ENCODE measurements at regions of chr15 and their contacts with region 1.

Region 1: DNA sequence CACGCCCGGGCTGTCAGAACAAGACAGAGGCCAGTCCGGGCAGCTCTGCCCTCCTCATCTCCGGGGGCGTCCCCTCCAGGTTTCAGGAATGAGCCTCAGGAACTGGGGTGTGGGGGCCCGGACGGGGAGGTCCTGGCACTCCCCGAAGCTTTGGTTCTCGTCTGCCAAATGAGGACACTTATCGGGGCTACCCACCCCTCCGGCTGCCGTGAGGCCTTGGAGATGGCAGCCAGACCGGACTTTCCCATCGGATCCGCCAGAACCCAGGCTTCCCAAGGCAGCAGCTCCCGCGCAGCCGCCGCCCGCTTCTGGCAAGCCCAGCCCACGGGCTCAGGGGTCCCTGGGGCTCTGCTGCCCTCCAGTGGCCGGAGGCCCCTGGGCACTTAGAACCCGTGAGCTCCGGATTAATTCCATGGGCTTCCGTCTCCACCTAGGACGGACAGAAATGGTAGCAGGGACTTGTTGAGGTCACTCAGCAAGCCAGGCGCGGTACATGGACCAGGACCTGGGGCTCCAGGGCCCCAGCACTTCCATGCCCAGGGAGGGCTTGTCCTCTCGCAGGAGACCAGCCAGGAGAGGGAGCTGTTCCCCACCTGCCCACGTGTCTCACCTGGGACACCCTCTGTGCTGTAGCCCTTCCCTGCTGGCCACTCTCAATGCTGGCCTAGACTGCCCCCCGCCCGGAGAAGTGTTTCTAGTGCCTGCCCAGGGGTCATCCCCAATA is 89.4 kb downstream of the LINGO1 start:
- DNase-seq: peak; percentile 87 to 94 (median 90)
- ATAC-seq: peak; percentile 77 to 93 (median 90)
- H3K4me3 ChIP-seq: peak overlapping the region in 11 of 12 donors; percentile 7 to 57 (median 44)
- H3K27ac ChIP-seq: peak overlapping the region in 11 of 12 donors; percentile 53 to 86 (median 68)
- H3K4me1 ChIP-seq: peaks cover 4 to 54% (median 48%) of the 10 kb centered on the region in 12 donors
- H3K27me3 ChIP-seq: no peaks in the 10 kb centered on the region
- CTCF ChIP-seq: peak in 11 of 12 donors; percentile 90 to 99 (median 97)
- POLR2A ChIP-seq: peak in 1 of 2 donors; percentile 26

Region 2: DNA sequence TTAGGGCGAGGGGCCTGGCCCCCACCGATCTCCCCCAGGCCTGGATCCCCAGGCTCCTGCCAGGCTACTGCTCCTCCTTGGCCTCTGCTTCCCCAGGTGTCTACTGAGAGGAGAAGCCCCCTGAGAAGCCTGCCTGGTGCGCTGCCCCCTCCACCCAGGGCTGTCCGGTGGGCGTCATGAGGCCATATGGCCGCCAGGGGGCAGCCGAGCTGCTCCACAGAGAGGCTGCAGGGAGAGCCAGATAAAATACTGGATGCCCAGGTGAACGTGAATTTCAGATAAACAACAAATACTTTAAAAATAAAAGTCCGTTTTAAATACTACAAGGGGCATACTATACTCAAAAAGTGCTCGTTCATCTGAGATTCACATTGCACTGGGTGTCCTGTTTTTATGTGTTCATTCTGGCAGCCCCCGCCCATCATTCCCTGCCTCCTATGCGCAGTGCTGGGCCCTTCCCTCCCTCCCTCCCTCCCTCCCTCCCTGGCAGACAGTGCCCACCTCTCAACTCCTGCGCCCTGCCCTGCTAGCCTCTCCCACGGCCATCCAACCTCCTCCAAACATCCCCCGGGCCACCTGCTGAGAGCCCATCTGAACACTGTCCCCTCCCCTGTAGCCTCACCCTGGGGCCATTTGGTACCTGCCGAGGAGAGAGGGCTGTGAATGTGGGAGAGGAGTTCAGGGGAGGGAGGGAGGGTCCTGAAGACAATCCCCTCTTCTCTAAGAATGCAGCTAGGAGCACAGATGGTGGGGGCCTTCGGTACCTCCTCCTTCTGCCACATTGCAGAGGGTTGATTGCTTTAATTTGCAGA is 518.8 kb before region 1 on chr15:
- intact Hi-C with region 1: loop called in 9 of 10 experiments (anchors 2 to 10 kb)
- DNase-seq: peak; percentile 60 to 84 (median 69)
- ATAC-seq: peak; percentile 22 to 48 (median 40)
- H3K4me3 ChIP-seq: no peak overlapping the region
- H3K27ac ChIP-seq: peak overlapping the region in 1 of 12 donors; percentile 42
- H3K4me1 ChIP-seq: peaks cover 0 to 41% (median 19%) of the 10 kb centered on the region in 12 donors
- H3K27me3 ChIP-seq: no peaks in the 10 kb centered on the region
- CTCF ChIP-seq: peak; percentile 92 to 98 (median 96)
- POLR2A ChIP-seq: no peak

Region 3: DNA sequence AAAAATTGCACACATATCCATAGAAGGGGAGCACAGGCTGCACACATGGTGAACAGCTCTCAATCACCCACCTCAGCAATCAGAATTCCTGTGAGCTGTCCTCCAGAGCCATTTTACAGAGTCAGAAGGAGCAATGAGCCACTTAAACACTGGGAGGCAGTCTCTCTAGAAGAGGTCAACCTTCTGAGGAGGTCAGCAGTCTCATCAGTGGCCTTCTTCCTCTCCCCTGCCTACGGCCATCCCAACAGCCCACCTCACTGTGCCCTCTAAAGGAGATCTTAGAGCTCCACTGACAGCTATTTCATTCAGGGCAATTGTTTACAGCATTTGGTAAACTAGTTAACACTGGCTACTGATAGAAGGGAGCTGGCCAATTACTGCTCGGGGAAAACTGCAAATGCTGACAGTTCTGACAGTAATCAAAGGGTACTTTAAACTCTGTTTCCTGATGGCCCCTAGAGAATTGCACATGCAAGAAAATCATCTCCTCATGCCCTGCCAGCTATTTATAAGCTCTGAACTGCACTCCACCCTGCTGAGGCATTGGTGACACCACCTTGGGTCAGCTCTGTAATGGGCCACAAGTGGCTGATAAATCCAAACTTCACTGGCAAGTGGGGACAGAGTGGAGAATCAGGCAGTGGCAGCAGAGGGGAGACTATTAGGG is 430.4 kb before region 1 on chr15:
- intact Hi-C with region 1: loop called in 8 of 10 experiments (anchors 2 to 5 kb)
- DNase-seq: no peak
- ATAC-seq: peak in 3 of 4 donors; percentile 30 to 72 (median 37)
- H3K4me3 ChIP-seq: no peak overlapping the region
- H3K27ac ChIP-seq: peak overlapping the region in 1 of 12 donors; percentile 1
- H3K4me1 ChIP-seq: peaks cover 0 to 34% (median 14%) of the 10 kb centered on the region in 12 donors
- H3K27me3 ChIP-seq: no peaks in the 10 kb centered on the region
- CTCF ChIP-seq: peak in 1 of 12 donors; percentile 12
- POLR2A ChIP-seq: no peak

Region 4: DNA sequence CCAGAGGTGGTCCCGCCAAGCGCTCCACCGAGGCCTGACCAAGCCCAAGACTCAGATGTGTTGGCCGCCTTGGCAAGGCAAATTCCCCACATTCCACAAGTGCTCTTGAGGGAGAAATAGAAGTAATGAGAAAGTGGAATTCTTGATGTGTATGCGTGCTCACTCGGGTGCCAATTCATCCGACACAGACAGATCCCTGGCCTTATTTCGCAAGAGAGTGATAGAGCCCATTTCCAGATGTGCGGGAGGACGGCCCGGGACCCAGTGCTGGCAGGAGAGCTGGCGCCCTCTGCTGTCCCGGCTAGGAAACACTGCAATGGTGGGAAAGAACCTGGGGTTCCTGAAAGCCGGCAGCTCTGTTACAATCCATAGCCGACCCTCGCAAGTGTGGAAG is 46.6 kb before region 1 on chr15:
- intact Hi-C with region 1: loop called in 8 of 10 experiments (anchors 2 to 5 kb)
- DNase-seq: peak; percentile 88 to 92 (median 90)
- ATAC-seq: peak; percentile 77 to 85 (median 82)
- H3K4me3 ChIP-seq: peak overlapping the region in 9 of 12 donors; percentile 8 to 39 (median 22)
- H3K27ac ChIP-seq: peak overlapping the region; percentile 53 to 96 (median 90)
- H3K4me1 ChIP-seq: peaks cover 3 to 85% (median 67%) of the 10 kb centered on the region in 12 donors
- H3K27me3 ChIP-seq: no peaks in the 10 kb centered on the region
- CTCF ChIP-seq: peak; percentile 92 to 98 (median 96)
- POLR2A ChIP-seq: no peak

Region 5: DNA sequence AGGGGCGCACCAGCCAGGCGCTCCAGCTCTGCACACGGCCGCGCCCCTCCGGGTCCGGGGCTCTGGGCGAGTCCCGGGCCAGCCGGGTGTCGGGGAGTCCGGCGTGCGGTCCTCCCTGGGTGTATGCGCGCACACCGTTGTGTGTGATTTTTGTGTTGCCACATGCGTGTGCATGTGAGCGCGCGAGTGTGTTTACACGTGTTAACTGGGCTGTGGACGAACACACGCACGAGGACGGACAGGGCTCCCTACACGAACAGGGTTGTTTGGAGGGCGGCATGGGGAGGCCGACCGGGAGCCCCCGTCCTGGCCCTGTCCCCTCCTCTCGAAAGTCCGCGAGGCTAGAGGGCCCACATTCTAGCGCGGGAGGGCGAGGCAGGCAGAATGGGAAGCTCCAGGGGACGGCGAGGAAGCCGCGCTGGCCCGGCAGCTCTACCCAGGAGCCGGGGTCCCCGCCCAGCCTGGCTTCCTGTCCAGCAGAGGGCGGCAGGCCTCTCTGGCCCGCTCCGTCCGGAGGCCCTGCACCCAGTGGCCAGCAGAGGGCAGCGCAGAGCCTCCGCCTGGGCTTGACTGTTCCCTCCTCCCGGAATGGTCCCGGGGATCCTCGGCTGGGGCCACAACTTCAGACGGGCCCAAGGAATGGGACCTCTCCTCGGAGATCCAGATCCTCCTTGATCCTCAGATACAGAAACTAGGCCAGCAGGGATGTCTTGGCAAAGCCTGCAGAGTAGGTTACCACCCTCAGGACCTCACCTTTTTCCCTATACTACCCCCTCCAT is 90.0 kb after region 1 on chr15:
- intact Hi-C with region 1: loop called in 1 of 10 experiments (anchors 5 kb)
- DNase-seq: peak; percentile 89 to 95 (median 90)
- ATAC-seq: peak; percentile 86 to 97 (median 94)
- H3K4me3 ChIP-seq: peak overlapping the region; percentile 40 to 65 (median 56)
- H3K27ac ChIP-seq: peak overlapping the region in 6 of 12 donors; percentile 5 to 65 (median 51)
- H3K4me1 ChIP-seq: peaks cover 0 to 37% (median 11%) of the 10 kb centered on the region in 12 donors
- H3K27me3 ChIP-seq: peaks cover 5 to 54% (median 30%) of the 10 kb centered on the region in 9 donors
- CTCF ChIP-seq: peak; percentile 100
- POLR2A ChIP-seq: no peak